Activated CD4-positive, alpha-beta T cell treated with anti-CD3 and anti-CD28 coated beads, Interleukin-2, amount 10 ng/mL, durations not matched to agents 24 days and 14 days (primary cell): ENCODE measurements at regions of chr1 and their contacts with region 1.

Region 1: DNA sequence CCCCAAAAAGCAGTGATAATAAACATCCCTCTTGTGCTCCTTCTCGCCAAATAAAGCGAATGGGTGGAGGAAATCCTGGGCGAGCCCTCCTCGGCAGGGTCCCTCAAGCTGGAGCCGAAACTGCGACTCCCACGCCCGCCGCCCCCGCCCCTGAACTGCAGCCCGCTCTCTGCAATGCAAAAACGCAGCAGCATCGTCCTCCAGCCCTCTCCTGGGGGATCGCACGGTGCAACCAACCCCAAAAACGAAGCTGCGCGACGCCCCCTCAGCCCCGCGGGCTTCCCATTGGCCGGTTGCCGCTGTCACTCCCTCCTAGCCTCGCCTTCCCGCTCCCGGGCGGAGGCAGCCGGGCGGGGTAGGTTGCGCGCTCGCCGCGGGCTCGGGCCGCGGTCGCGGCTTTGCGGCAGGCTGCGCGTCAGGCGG is at the start of gene TMCC2:
- DNase-seq: peak; percentile 95
- H3K4me3 Mint-ChIP-seq: peak within 1 kb of the TSS; percentile 91
- H3K27ac Mint-ChIP-seq: peak within 1 kb of the TSS; percentile 86
- H3K4me1 Mint-ChIP-seq: peaks cover 42% of the 10 kb centered on the region
- H3K27me3 Mint-ChIP-seq: peaks cover 31% of the 10 kb centered on the region
- total RNA-seq, gene TMCC2: 19.9 and 20.9 TPM in 2 replicates

Region 2: GRCh38 chr1:205121660-205122488 is 105.7 kb before region 1 on chr1 and contains the start of gene RBBP5:
- intact Hi-C with region 1: loop called (anchors 1 kb)
- DNase-seq: peak; percentile 98
- H3K4me3 Mint-ChIP-seq: peak within 1 kb of the TSS; percentile 98
- H3K27ac Mint-ChIP-seq: peak within 1 kb of the TSS; percentile 98
- H3K4me1 Mint-ChIP-seq: peaks cover 34% of the 10 kb centered on the region
- H3K27me3 Mint-ChIP-seq: no peaks in the 10 kb centered on the region
- total RNA-seq, gene RBBP5: 24.0 and 27.2 TPM in 2 replicates

Region 3: DNA sequence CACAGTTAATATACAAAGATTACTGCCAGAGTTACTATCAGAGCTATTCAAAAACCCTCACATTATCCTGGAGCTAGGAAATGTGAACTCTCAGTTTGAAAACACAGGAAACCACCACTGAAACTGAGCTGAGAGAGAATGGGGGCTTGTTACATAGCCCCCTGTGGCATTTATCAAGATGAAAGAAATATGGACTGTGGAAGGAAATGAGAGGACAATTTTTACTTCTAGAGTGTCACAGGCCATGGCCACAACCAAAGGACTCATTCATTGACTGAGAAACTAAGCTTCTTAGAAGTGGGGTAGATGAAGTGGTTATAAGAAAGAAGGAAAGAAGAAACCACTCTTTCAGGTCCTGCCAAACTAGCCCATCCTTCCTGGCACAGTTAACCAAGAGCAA is 41.4 kb before region 1 on chr1:
- intact Hi-C with region 1: loop called (anchors 2 kb)
- DNase-seq: no peak
- H3K4me3 Mint-ChIP-seq: peak overlapping the region; percentile 16
- H3K27ac Mint-ChIP-seq: peak overlapping the region; percentile 63
- H3K4me1 Mint-ChIP-seq: peaks cover 54% of the 10 kb centered on the region
- H3K27me3 Mint-ChIP-seq: no peaks in the 10 kb centered on the region

Region 4: DNA sequence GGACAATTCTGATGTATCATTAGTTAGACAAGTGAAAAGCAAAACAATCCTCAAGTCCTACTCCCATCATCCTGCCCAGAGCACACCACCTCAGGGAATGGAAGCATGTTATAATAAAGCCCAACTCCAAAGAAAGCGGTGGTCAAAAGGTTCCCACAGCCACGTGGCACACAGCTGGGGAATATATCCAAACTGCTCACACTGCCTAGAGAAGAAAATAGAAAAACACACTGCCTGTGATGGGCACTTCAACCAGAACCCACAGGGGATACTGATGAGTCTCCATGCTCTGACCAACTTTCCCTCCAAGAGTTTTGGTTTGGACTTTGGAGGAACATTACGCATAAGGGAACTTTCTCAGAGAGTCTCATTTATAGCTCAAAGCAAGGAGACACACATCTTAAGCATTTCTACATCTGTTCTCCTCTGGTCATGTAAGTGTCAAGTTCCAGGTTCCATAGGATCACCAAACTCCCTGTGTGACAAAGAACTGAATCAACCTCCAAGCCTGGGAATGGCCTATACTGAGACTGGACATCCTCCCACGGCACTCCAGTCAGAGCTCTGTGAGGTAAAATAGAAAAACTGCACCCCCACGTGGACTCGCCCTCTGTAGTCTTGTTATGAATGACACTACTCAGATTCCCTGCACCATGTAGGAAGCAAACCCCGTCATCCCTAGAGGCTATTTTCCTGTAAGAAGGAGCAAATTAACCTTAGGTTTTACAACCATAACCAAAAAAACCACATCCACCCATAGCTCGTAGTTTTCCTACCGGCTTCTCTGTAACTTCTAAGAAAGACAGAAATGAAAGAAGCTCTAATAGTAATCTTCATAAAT is 28.3 kb before region 1 on chr1:
- intact Hi-C with region 1: loop called (anchors 1 kb)
- DNase-seq: peak; percentile 78
- H3K4me3 Mint-ChIP-seq: peak overlapping the region; percentile 66
- H3K27ac Mint-ChIP-seq: peak overlapping the region; percentile 85
- H3K4me1 Mint-ChIP-seq: peaks cover 50% of the 10 kb centered on the region
- H3K27me3 Mint-ChIP-seq: no peaks in the 10 kb centered on the region

Region 5: DNA sequence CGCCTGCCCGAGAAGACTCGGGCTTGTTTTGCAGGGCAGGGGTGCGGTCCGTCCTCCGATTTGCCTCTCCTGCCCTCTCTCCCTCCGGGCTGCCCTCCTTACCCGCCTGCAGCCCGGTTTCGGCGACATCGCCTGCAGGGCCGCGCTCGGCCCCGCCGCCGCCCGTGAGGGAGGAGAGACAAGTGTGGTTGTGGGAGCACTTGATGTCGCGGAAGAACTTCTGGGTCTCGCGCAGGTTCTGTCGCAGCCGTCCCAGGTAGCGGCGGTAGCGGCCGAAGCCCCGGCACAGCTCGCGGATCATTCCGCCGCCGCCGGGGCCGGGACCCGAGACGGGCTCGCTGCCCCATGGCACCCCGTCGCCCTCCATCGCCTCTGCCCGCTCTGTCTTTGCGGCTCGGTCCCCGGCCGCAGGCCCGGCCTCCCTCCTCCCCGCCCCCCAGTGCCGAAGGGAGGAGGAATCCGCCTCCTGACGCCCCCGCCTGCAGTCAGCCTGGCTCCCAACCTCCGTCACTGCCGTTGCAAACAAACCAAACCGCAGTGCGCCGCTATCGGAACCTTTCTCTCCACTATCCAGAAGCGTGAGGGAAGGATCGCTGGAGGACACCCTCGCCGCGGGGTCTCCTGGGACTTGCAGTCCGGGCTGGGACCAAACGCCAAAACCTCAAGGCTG is 16.3 kb before region 1 on chr1 and contains the start of gene DSTYK:
- intact Hi-C with region 1: loop called (anchors 1 kb)
- DNase-seq: peak; percentile 97
- H3K4me3 Mint-ChIP-seq: peak within 1 kb of the TSS; percentile 95
- H3K27ac Mint-ChIP-seq: peak within 1 kb of the TSS; percentile 96
- H3K4me1 Mint-ChIP-seq: peaks cover 42% of the 10 kb centered on the region
- H3K27me3 Mint-ChIP-seq: no peaks in the 10 kb centered on the region
- total RNA-seq, gene DSTYK: 26.7 and 27.6 TPM in 2 replicates

Region 6: GRCh38 chr1:205237526-205238484 is 10.2 kb after region 1 on chr1:
- intact Hi-C with region 1: loop called (anchors 1 kb)
- DNase-seq: peak; percentile 68
- H3K4me3 Mint-ChIP-seq: peak overlapping the region; percentile 75
- H3K27ac Mint-ChIP-seq: peak overlapping the region; percentile 97
- H3K4me1 Mint-ChIP-seq: peaks cover 51% of the 10 kb centered on the region
- H3K27me3 Mint-ChIP-seq: no peaks in the 10 kb centered on the region

Region 7: DNA sequence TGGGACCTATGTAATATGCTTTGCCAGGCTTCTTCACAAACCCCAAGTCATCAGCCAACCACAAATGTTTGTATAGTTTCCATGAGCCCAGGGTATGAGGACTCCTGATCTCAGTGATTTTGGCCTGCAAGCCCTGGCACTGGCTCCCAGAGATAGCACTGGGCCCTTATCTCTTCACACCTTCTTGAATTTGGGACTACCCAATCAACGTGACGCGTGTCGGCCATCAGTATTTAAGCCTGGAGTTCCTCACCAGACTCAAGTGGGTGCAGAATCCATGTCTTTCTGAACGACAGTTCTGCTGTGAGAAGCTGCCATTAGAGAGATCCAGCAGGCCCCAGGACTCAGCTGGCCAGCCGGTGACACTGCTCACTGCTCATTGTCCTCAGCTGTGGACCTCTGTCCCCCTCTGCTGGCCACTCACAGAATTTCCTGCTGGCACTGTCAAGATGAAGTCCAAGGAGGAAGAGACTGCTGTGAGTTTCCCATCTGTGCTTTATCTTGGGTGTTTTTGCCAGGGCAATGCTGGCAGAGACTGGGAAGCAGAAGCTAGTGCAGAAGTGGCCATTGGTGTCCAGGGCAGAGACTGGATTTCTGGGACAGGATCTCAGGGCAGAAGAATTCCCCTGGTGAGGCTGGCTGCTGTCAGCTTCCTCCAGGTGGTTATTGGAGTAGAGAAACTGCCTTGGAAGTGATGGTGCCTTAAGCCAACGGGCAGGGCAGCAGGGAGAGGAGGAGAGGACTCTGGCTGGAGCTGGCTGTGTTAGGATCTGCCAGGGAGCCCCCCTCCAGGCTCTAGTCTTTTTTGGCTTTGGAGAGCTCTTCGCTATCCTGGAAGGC is 28.6 kb after region 1 on chr1:
- intact Hi-C with region 1: loop called (anchors 1 kb)
- DNase-seq: peak; percentile 96
- H3K4me3 Mint-ChIP-seq: no peak overlapping the region
- H3K27ac Mint-ChIP-seq: no peak overlapping the region
- H3K4me1 Mint-ChIP-seq: peaks cover 5% of the 10 kb centered on the region
- H3K27me3 Mint-ChIP-seq: no peaks in the 10 kb centered on the region